Activated T-helper 2 cell treated with anti-CD3 and anti-CD28 coated beads, Interferon-gamma antibody, Interleukin-2, Interleukin-4, amounts not matched to agents 10 μg/mL and 5 μg/mL and 100 μg/mL, durations not matched to agents 14 hours and 24 hours and 36 hours (primary cell): ENCODE measurements at regions of chr17 and their contacts with region 1.

Region 1: GRCh38 chr17:81484195-81484979 is 28.2 kb downstream of the ACTG1 start:
- DNase-seq: peak; percentile 84
- H3K4me3 Mint-ChIP-seq: peak overlapping the region; percentile 13
- H3K27ac Mint-ChIP-seq: no peak overlapping the region
- H3K4me1 Mint-ChIP-seq: peaks cover 12% of the 10 kb centered on the region
- H3K27me3 Mint-ChIP-seq: peaks cover 28% of the 10 kb centered on the region

Region 2: GRCh38 chr17:81238817-81239600 is 245.4 kb before region 1 on chr17 and contains the starts of genes NDUFAF8 and TEPSIN:
- intact Hi-C with region 1: loop called (anchors 5 kb)
- DNase-seq: peak; percentile 97
- H3K4me3 Mint-ChIP-seq: peak within 1 kb of the TSS; percentile 96
- H3K27ac Mint-ChIP-seq: peak within 1 kb of the TSS; percentile 95
- H3K4me1 Mint-ChIP-seq: peaks cover 20% of the 10 kb centered on the region
- H3K27me3 Mint-ChIP-seq: no peaks in the 10 kb centered on the region
- total RNA-seq, gene NDUFAF8: 57.7 and 58.1 TPM in 2 replicates
- total RNA-seq, gene TEPSIN: 33.4 and 39.1 TPM in 2 replicates

Region 3: DNA sequence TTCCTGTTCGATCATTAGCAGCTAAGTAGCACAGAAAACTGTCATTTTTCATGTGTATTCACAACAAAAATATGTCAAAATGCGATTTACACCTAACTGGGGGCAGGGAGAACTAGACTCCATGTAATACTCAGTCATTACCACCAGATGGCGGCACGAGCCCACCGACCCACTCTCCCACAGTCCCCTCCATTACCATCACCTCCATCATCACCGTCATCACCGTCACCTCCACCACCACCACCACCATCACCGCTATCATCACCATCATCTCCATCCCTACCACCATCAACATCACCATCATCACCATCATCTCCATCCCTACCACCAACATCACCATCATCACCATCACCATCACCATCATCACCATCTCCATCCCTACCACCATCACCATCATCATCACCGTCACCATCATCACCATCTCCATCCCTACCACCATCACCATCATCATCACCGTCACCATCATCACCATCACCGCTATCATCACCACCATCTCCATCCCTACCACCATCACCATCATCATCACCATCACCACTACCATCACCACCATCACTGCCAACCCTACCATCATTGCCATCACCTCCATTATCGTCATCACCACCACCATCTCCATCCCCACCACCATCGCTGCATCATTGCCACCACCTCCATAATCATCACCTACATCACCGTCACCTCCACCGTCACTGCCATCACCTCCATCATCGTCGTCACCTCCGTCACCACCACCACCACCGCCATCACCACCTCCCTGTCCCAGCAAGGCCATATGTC is 230.8 kb before region 1 on chr17:
- intact Hi-C with region 1: loop called (anchors 2 kb)
- DNase-seq: peak; percentile 41
- H3K4me3 Mint-ChIP-seq: no peak overlapping the region
- H3K27ac Mint-ChIP-seq: peak overlapping the region; percentile 2
- H3K4me1 Mint-ChIP-seq: peaks cover 2% of the 10 kb centered on the region
- H3K27me3 Mint-ChIP-seq: no peaks in the 10 kb centered on the region

Region 4: GRCh38 chr17:81294856-81295680 is 189.3 kb before region 1 on chr17 and contains the start of gene SLC38A10:
- intact Hi-C with region 1: loop called (anchors 2 kb)
- DNase-seq: peak; percentile 91
- H3K4me3 Mint-ChIP-seq: peak within 1 kb of the TSS; percentile 95
- H3K27ac Mint-ChIP-seq: peak within 1 kb of the TSS; percentile 88
- H3K4me1 Mint-ChIP-seq: peaks cover 22% of the 10 kb centered on the region
- H3K27me3 Mint-ChIP-seq: no peaks in the 10 kb centered on the region
- total RNA-seq, gene SLC38A10: 102 and 116 TPM in 2 replicates

Region 5: GRCh38 chr17:81387100-81388090 is 97.0 kb before region 1 on chr17:
- intact Hi-C with region 1: loop called (anchors 5 kb)
- DNase-seq: peak; percentile 35
- H3K4me3 Mint-ChIP-seq: peak overlapping the region; percentile 73
- H3K27ac Mint-ChIP-seq: peak overlapping the region; percentile 46
- H3K4me1 Mint-ChIP-seq: peaks cover 6% of the 10 kb centered on the region
- H3K27me3 Mint-ChIP-seq: peaks cover 45% of the 10 kb centered on the region

Region 6: DNA sequence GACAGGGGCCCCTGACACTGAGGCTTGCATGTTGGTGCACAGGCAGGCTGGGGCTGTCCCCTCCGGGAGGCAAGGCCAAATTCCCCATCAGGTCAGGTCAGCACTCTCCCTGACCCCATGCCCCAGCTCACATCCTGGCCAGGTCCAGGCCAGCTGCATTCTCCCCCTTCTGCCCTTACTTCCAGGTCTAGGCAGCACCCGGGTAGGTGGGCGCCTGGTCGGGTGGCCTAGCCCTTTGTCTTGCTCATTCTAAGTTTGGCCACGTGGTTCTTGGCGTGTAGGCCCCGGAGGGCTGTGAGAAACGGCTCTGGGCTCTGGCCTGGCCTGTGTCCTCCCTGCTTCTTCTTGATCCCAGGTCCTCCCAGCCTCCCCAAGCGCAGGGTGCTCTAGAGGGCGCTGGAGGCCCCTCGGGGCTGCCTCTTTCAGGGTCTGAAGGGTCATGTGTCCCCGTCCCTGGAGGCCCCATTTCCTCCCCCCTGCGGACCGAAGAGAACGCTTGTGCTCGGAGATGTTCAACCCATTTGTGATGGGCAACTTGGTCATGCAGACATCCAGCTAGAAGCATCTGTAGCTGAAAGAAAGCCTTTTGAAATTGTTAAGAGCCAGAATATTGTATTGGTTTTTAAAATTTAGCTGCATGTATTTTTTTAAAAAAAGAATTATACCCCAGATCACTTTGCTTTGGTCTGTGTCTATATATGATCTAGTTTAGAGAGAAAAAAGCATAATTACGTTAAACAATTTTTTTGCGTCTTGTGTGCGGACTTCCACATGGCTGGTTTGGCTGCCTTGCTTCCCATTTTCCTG is 82.5 kb before region 1 on chr17:
- intact Hi-C with region 1: loop called (anchors 5 kb)
- DNase-seq: no peak
- H3K4me3 Mint-ChIP-seq: no peak overlapping the region
- H3K27ac Mint-ChIP-seq: no peak overlapping the region
- H3K4me1 Mint-ChIP-seq: peaks cover 3% of the 10 kb centered on the region
- H3K27me3 Mint-ChIP-seq: peaks cover 51% of the 10 kb centered on the region